Activated CD4-positive, alpha-beta memory T cell treated with anti-CD3 and anti-CD28 coated beads, Interleukin-2, amount 10 ng/mL, durations not matched to agents 7 days and 5 days (primary cell): ENCODE measurements at regions of chr11 and their contacts with region 1.

Region 1: GRCh38 chr11:128472128-128473089 is 114.9 kb downstream of the ETS1 start:
- DNase-seq: no peak
- H3K4me3 Mint-ChIP-seq: peak overlapping the region; percentile 44
- H3K27ac Mint-ChIP-seq: peak overlapping the region; percentile 80
- H3K4me1 Mint-ChIP-seq: peaks cover 99% of the 10 kb centered on the region
- H3K27me3 Mint-ChIP-seq: no peaks in the 10 kb centered on the region

Region 2: DNA sequence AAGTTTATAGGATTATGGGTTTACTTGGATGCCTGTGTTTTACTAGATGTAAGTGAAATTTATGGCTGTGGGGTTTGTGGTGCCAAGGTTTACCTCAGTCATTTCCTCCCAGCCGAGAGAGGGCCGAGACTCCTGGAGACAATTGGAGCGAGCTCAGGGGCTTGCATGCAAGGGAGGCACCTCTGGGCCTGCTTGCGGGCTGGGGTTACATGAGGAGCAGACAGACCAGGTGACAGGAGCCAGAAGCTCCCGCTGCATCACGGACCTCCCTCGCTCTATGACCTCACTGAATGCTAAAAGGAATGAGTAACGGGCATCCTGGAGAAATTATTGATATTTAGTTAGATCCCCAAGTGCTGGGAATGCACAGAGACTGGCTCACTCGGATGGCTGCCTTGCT is 1196.6 kb before region 1 on chr11:
- CTCF ChIA-PET with region 1: no interaction called
- POLR2A ChIA-PET with region 1: no interaction called
- DNase-seq: no peak
- H3K4me3 Mint-ChIP-seq: no peak overlapping the region
- H3K27ac Mint-ChIP-seq: no peak overlapping the region
- H3K4me1 Mint-ChIP-seq: no peaks in the 10 kb centered on the region
- H3K27me3 Mint-ChIP-seq: no peaks in the 10 kb centered on the region

Region 3: GRCh38 chr11:128271401-128271800 is 201.0 kb before region 1 on chr11:
- CTCF ChIA-PET with region 1: no interaction called
- POLR2A ChIA-PET with region 1: no interaction called
- DNase-seq: no peak
- H3K4me3 Mint-ChIP-seq: no peak overlapping the region
- H3K27ac Mint-ChIP-seq: no peak overlapping the region
- H3K4me1 Mint-ChIP-seq: peaks cover 4% of the 10 kb centered on the region
- H3K27me3 Mint-ChIP-seq: peaks cover 2% of the 10 kb centered on the region

Region 4: GRCh38 chr11:128297091-128297651 is 175.2 kb before region 1 on chr11:
- CTCF ChIA-PET with region 1: interaction called, 51 read pairs
- POLR2A ChIA-PET with region 1: interaction called, 125 read pairs
- DNase-seq: no peak
- H3K4me3 Mint-ChIP-seq: no peak overlapping the region
- H3K27ac Mint-ChIP-seq: no peak overlapping the region
- H3K4me1 Mint-ChIP-seq: peaks cover 86% of the 10 kb centered on the region
- H3K27me3 Mint-ChIP-seq: no peaks in the 10 kb centered on the region

Region 5: GRCh38 chr11:128482512-128483191 is 10.2 kb after region 1 on chr11:
- CTCF ChIA-PET with region 1: interaction called, 30 read pairs
- POLR2A ChIA-PET with region 1: interaction called, 436 read pairs
- DNase-seq: peak; percentile 59
- H3K4me3 Mint-ChIP-seq: peak overlapping the region; percentile 67
- H3K27ac Mint-ChIP-seq: peak overlapping the region; percentile 92
- H3K4me1 Mint-ChIP-seq: peaks cover 95% of the 10 kb centered on the region
- H3K27me3 Mint-ChIP-seq: no peaks in the 10 kb centered on the region

Region 6: DNA sequence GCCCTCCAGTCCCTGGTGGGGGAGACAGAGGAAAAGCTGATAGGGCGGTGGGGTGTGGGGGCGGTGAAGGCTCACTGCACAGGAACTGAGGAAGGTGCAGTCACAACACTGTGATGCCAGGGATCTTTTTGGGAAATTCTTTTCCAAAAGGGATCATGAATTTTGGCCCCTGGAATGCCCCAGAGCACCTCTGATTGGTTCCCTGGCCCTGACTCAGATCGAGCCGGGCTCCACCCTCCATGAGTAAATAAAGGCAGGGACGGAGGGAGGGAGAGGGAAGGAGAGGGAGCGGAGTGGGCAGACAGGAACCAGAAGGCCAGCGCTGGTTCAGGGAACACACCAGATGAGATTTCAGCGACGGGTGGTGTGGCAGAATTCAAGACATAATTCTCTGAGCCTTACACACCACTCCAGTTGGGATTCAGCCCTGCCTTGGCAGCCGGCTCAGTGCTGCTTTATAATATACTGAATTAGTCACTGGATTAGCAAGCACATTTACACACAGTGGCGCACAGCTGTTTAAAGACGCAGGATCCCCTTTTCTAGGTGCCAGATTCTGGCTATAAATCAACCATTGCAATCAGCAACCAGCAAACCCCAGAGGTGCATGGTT is 34.7 kb after region 1 on chr11:
- CTCF ChIA-PET with region 1: interaction called, 14 read pairs
- POLR2A ChIA-PET with region 1: interaction called, 884 read pairs
- DNase-seq: no peak
- H3K4me3 Mint-ChIP-seq: peak overlapping the region; percentile 69
- H3K27ac Mint-ChIP-seq: peak overlapping the region; percentile 71
- H3K4me1 Mint-ChIP-seq: peaks cover 99% of the 10 kb centered on the region
- H3K27me3 Mint-ChIP-seq: no peaks in the 10 kb centered on the region

Region 7: DNA sequence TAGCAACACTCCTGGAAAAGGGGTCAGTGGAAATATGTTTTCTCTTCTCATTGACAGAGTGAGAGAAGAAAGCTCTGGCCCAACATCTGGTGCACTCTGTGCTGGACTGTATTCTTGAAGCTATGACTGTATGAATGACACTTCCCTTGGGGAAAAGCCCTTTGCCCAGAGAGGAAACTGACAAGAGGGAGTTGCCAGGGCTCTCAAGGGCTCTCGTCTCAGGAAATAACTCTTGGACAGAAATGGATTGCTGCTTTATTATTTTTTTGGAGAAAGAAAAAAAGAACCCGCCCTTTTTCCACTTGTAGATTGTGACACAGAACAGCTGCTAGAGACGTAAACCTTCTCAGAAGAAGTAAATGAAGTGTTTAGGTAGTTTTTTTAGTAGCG is 103.5 kb after region 1 on chr11:
- CTCF ChIA-PET with region 1: no interaction called
- POLR2A ChIA-PET with region 1: no interaction called
- DNase-seq: no peak
- H3K4me3 Mint-ChIP-seq: no peak overlapping the region
- H3K27ac Mint-ChIP-seq: no peak overlapping the region
- H3K4me1 Mint-ChIP-seq: peaks cover 22% of the 10 kb centered on the region
- H3K27me3 Mint-ChIP-seq: no peaks in the 10 kb centered on the region